Activated B cell treated with CpG ODN at 0.5 μM for 24 hours (primary cell): ENCODE measurements at regions of chr5 and their contacts with region 1.

Region 1: DNA sequence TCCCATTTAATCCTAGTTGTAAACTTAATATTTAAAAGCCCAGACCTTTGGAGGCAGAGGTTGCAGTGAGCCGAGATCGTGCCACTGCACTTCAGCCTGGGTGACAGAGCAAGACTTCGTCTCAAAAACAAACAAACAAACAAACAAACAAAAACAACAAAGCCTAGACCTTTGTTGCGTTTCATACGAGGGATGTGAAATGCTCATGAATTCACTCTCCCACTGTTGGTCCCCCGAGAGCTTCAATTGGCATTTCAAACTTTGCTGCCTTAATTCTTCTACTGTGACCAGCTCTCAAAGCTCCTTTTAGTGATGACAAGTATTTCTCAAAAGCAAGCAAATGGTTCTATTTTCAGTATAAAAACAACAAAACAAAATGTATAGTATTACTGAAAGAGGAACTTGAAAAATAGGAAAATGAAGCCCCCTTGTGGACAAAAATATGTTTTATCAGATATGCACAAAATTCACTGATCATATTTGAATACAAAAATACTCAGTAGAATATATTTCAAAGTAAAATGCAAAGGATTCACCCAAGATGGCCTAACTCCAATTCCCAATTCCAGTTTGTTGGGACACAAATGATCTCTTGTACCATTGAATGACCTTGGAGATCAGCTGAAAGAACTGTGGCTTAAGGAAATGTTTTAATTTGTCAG is 140.4 kb downstream of the ESM1 start:
- DNase-seq: no peak
- ATAC-seq: peak; percentile 50
- H3K4me3 Mint-ChIP-seq: peak overlapping the region; percentile 69
- H3K27ac Mint-ChIP-seq: peak overlapping the region; percentile 67
- H3K4me1 Mint-ChIP-seq: peaks cover 23% of the 10 kb centered on the region
- H3K27me3 Mint-ChIP-seq: peaks cover 7% of the 10 kb centered on the region
- CTCF ChIP-seq: peak; percentile 28

Region 2: GRCh38 chr5:54524704-54525103 is 320.3 kb before region 1 on chr5:
- CTCF ChIA-PET with region 1: interaction called, 160 read pairs
- POLR2A ChIA-PET with region 1: no interaction called
- intact Hi-C with region 1: no loop called
- DNase-seq: no peak
- ATAC-seq: no peak
- H3K4me3 Mint-ChIP-seq: no peak overlapping the region
- H3K27ac Mint-ChIP-seq: no peak overlapping the region
- H3K4me1 Mint-ChIP-seq: peaks cover 6% of the 10 kb centered on the region
- H3K27me3 Mint-ChIP-seq: no peaks in the 10 kb centered on the region
- CTCF ChIP-seq: no peak

Region 3: GRCh38 chr5:54646356-54647101 is 198.5 kb before region 1 on chr5:
- CTCF ChIA-PET with region 1: interaction called, 10 read pairs
- POLR2A ChIA-PET with region 1: no interaction called
- intact Hi-C with region 1: loop called (anchors 1 kb)
- DNase-seq: peak; percentile 47
- ATAC-seq: peak; percentile 93
- H3K4me3 Mint-ChIP-seq: peak overlapping the region; percentile 71
- H3K27ac Mint-ChIP-seq: peak overlapping the region; percentile 93
- H3K4me1 Mint-ChIP-seq: peaks cover 69% of the 10 kb centered on the region
- H3K27me3 Mint-ChIP-seq: no peaks in the 10 kb centered on the region
- CTCF ChIP-seq: no peak

Region 4: DNA sequence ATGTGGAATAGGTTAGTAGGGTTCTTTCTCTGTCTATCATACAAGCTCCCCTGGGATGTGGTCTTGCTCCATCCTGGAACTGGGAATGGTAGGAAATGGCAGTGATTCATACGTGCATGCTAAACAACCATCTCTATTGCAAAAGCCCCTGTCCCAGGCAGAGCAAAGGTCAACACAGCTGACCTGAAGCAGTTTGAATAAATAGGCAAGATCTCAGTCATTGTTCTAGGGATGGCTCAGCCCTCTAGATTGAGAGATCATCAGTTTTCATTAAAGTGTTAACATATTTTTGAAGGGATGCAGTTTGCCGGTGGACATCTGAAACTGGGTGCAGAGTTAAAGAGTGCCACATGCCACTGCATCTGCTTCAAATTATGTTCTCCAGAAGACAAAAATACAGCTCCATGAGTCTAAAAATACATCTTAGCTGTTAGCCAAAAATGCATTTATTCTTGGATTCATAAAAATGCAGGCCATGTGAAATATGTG is 83.8 kb before region 1 on chr5:
- CTCF ChIA-PET with region 1: interaction called, 7 read pairs
- POLR2A ChIA-PET with region 1: interaction called, 16 read pairs
- intact Hi-C with region 1: no loop called
- DNase-seq: no peak
- ATAC-seq: no peak
- H3K4me3 Mint-ChIP-seq: no peak overlapping the region
- H3K27ac Mint-ChIP-seq: no peak overlapping the region
- H3K4me1 Mint-ChIP-seq: peaks cover 69% of the 10 kb centered on the region
- H3K27me3 Mint-ChIP-seq: no peaks in the 10 kb centered on the region
- CTCF ChIP-seq: no peak

Region 5: GRCh38 chr5:54832858-54833257 is 12.2 kb before region 1 on chr5:
- CTCF ChIA-PET with region 1: interaction called, 19 read pairs
- POLR2A ChIA-PET with region 1: no interaction called
- intact Hi-C with region 1: no loop called
- DNase-seq: no peak
- ATAC-seq: peak; percentile 89
- H3K4me3 Mint-ChIP-seq: peak overlapping the region; percentile 41
- H3K27ac Mint-ChIP-seq: peak overlapping the region; percentile 77
- H3K4me1 Mint-ChIP-seq: peaks cover 42% of the 10 kb centered on the region
- H3K27me3 Mint-ChIP-seq: no peaks in the 10 kb centered on the region
- CTCF ChIP-seq: no peak